Activated CD8-positive, alpha-beta T cell treated with anti-CD3 and anti-CD28 coated beads for 36 hours (primary cell): ENCODE measurements at regions of chr19 and their contacts with region 1.

Region 1: DNA sequence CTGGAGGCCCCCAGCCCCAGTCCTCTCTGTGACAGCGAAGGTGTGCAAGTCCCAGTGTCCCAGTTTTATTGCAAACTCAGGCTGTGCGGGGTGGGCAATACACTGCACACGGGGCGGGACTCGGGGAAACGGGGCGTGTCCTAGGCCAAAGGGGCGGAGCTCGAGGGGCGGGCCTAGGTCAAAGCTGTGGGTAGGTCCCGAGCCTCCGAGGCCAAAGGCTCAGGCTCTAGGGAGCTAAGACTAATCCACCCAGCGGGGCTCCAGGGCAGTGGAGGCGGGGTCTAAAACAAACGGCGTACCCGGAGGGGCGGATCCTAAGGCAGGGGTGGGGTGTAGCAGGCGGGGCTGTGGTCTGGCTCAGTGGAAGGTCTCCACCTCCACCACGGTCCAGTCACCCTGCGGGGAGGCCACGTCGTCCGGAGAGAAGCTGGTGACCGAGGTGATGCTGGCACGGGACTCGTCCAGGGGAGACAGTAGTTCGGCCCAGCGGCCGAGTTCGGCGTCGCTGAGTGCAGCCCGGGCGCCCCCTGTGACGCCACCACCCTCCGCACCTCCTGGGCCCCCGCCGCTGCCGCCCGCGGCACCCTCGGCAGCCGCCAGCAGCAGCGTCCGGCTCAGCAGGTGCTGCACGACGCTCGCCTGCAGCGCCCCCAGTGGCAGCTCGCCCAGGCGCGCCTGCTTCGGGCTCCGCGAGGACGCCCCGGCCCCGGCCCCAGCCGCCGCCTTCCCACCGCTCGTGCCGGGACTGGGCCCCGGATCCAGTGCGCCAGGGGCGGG is 5.3 kb downstream of the PRR36 start:
- DNase-seq: peak; percentile 86
- ATAC-seq: peak; percentile 67
- H3K4me3 Mint-ChIP-seq: peak overlapping the region; percentile 75
- H3K27ac Mint-ChIP-seq: peak overlapping the region; percentile 73
- H3K4me1 Mint-ChIP-seq: peaks cover 34% of the 10 kb centered on the region
- H3K27me3 Mint-ChIP-seq: peaks cover 42% of the 10 kb centered on the region
- CTCF ChIP-seq: peak; percentile 96

Region 2: DNA sequence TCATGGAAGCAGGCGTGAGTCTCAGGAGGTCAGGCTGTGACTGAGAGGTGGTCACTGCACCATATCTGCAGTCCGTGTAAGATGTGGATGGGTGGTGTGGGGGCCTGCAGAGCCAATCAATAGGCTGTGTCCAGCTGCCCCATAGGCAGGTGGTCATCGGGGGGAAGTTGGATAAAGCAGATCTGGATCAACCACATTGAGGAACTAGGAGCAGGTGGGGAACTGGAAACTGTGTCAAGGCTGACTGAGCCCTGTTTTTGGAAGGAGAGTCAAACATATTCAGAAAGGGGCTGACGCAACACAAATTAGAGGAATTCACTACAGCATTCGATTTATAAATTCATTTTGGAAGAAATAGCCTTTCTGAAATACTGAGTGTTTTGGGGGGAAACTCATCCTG is 90.8 kb before region 1 on chr19:
- CTCF ChIA-PET with region 1: no interaction called
- POLR2A ChIA-PET with region 1: no interaction called
- intact Hi-C with region 1: no loop called
- DNase-seq: no peak
- ATAC-seq: no peak
- H3K4me3 Mint-ChIP-seq: no peak overlapping the region
- H3K27ac Mint-ChIP-seq: no peak overlapping the region
- H3K4me1 Mint-ChIP-seq: peaks cover 4% of the 10 kb centered on the region
- H3K27me3 Mint-ChIP-seq: peaks cover 33% of the 10 kb centered on the region
- CTCF ChIP-seq: no peak

Region 3: DNA sequence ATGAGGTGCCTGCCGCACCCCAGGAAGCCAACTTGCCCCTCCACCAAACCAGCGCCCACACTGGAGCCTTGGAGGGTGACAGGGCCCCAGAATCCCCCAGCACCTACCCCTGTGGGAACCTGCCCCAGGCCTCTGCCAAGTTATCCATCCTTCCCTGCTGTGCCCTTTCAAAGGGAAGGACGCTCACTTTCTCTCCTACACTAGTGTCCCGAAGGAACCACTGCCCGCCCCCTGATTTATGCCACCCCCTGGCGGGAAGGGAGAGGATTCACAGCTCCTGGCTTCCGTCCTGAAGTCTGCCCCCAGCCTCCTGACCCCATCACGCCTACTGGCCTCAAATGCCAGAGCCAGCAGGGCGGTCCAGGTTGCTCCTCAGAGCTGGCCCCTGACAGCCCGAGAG is 37.4 kb before region 1 on chr19:
- CTCF ChIA-PET with region 1: interaction called, 11 read pairs
- POLR2A ChIA-PET with region 1: no interaction called
- intact Hi-C with region 1: no loop called
- DNase-seq: no peak
- ATAC-seq: no peak
- H3K4me3 Mint-ChIP-seq: peak overlapping the region; percentile 67
- H3K27ac Mint-ChIP-seq: no peak overlapping the region
- H3K4me1 Mint-ChIP-seq: peaks cover 14% of the 10 kb centered on the region
- H3K27me3 Mint-ChIP-seq: peaks cover 3% of the 10 kb centered on the region
- CTCF ChIP-seq: no peak

Region 4: GRCh38 chr19:7903244-7904073 is 34.6 kb after region 1 on chr19 and contains the start of gene MAP2K7:
- CTCF ChIA-PET with region 1: interaction called, 10 read pairs
- POLR2A ChIA-PET with region 1: no interaction called
- intact Hi-C with region 1: no loop called
- DNase-seq: peak; percentile 100
- ATAC-seq: peak; percentile 92
- H3K4me3 Mint-ChIP-seq: peak within 1 kb of the TSS; percentile 89
- H3K27ac Mint-ChIP-seq: peak within 1 kb of the TSS; percentile 91
- H3K4me1 Mint-ChIP-seq: peaks cover 18% of the 10 kb centered on the region
- H3K27me3 Mint-ChIP-seq: no peaks in the 10 kb centered on the region
- CTCF ChIP-seq: peak; percentile 54
- total RNA-seq, gene MAP2K7: 36.8 to 37.0 TPM